Lower leg skin (tissue), 4 donors: ENCODE measurements at regions of chr9 and their contacts with region 1.

Region 1: DNA sequence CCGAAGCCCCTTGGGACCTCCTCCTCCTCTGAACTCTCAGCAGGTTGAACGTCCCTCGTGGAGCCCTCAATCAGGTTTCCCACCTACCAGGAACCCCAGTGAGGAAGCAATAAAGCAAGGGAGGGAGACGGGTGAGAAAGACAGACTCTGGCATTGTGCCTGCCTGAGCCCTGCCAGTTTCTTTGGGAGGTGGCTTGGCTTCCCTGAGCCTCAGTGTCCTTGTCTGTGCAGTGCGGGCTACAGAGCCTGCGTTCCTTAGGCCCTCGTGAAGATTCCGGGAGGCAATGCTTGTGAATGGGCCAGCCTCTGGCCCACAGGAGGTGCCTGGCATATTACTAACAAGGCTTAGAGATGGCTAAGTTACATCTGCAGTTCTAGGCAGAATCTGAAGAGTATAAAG is 11.9 kb downstream of the GTF3C5 start:
- DNase-seq: no peak
- H3K4me3 ChIP-seq: no peak overlapping the region
- CTCF ChIP-seq: no peak
- POLR2A ChIP-seq: no peak

Region 2: DNA sequence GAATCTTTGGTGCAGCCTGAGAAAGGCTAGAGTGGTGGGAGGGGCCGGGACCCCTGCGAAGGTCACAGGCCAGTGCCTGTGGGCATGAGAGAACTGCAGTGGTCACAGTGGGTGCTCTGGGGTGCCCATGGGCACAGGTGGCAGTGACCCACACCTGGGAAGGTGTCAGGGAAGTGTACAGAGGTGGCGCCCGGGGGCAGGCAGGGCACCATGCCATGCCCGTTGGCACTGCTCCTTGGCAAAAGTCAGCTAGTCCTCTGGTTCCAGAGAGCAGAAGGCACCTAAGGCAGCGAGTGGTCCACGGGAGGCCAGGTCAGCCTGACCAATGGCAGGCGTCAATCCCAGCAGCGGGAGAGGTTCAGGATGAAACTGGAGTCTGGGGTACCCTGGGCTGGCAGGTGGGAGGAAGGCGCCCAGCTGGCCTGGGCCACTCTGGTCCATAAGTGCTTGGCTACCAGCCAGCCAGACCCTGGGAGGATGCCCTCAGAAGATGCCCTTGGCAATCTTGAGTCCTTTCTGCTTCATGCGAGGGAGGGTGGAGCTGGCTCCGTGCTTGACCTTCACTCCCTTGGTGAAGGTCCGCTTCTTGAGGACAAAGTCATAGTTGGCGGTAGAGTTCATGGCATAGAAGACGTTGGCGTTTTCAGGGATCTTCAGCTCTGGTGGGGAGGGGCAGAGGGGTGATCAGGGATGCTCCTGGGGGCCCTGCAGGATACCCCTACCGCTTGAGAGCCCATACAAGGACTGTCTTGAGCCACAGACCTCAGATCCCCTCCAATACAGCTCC is 55.6 kb after region 1 on chr9:
- intact Hi-C with region 1: loop called (anchors 2 kb)
- DNase-seq: no peak
- H3K4me3 ChIP-seq: no peak overlapping the region
- CTCF ChIP-seq: no peak
- POLR2A ChIP-seq: no peak

Region 3: DNA sequence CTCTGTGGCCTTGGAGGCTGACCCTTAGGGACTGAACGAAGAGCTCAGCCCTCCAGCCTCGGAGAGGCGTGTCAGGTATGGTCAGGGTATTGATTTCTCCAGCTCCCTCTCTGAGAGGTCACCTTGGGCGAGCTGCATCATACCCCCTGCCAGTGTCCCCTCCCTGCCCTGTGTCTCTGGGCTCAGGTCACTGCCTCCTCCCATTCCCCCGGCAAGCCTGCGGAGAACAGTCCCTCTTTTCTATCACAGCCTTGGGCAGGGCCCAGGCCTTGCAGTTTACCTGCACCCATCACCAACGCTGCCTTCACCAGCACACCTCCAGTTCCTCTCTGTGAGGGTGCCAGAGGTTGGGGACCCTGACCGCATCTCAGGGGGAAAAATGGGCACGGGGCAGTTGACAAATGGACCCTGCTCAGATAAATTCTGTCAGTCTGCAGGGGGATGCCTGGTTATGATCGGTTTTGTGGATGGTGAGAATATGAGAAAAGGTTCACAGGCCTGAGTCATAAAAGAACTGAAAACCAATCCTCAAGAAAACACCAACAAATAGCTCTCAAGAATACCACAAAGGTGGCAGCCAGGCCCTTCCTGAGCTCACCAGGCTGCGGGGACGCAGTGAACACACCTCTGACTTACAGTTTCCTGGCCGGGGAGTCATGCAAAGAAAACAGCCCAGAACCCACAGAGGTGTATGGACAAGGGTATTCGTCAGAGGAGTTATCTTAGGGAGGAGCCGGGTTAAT is 1258.9 kb after region 1 on chr9:
- intact Hi-C with region 1: no loop called
- DNase-seq: no peak
- H3K4me3 ChIP-seq: no peak overlapping the region
- CTCF ChIP-seq: no peak
- POLR2A ChIP-seq: no peak